ENCODE measurements at regions of chr11 and their contacts with region 1.

Region 1: GRCh38 chr11:128180446-128181087 is 406.8 kb downstream of the ETS1 start:
- DNase-seq: no peak
- ATAC-seq: peak in 2 of 8 donors; percentile 7 to 56
- H3K4me3 ChIP-seq: no peak overlapping the region
- H3K27ac ChIP-seq: no peak overlapping the region
- H3K4me1 ChIP-seq: peaks cover 0 to 12% (median 3%) of the 10 kb centered on the region in 9 donors
- H3K27me3 ChIP-seq: no peaks in the 10 kb centered on the region
- CTCF ChIP-seq: no peak

Region 2: DNA sequence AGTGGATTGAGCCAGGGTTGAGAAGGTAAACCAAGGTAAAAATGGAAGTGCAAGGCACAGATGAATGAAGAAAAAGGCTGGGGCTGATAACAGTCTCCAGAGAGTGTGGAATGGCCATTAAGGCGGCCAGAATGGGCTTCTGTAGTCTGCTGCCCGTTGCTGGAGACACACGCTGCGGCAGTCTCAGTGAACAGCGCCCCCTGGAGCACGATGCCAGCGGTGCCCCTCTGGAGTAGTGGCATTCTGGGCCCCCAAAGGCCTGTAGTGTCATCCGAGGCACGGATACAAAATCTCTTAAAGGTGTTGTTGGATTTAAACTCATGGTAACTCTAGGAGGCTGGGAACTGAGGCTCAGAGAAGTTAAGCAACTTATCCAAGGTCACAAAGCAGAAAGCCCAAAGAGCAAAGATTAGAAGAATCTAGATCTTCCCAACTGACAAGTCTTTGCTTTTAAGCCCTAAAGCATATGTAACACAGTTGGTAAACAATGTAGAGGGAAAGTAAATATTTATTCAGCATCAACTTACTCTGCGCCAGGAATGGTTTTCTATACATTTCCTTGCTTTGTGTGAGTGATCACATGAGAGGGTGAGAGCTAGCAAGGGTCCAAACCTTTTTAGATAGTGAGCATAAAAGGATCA is 668.4 kb after region 1 on chr11:
- intact Hi-C with region 1: loop called in 1 of 10 experiments (anchors 10 kb)
- DNase-seq: peak; percentile 62 to 75
- ATAC-seq: peak in 5 of 8 donors; percentile 33 to 81 (median 47)
- H3K4me3 ChIP-seq: no peak overlapping the region
- H3K27ac ChIP-seq: no peak overlapping the region
- H3K4me1 ChIP-seq: peaks cover 0 to 20% (median 5%) of the 10 kb centered on the region in 9 donors
- H3K27me3 ChIP-seq: no peaks in the 10 kb centered on the region
- CTCF ChIP-seq: peak; percentile 26 to 82 (median 69)

Measured in heart right ventricle (tissue), 16 donors.